ENCODE measurements at regions of chr7 and their contacts with region 1.

Region 1: DNA sequence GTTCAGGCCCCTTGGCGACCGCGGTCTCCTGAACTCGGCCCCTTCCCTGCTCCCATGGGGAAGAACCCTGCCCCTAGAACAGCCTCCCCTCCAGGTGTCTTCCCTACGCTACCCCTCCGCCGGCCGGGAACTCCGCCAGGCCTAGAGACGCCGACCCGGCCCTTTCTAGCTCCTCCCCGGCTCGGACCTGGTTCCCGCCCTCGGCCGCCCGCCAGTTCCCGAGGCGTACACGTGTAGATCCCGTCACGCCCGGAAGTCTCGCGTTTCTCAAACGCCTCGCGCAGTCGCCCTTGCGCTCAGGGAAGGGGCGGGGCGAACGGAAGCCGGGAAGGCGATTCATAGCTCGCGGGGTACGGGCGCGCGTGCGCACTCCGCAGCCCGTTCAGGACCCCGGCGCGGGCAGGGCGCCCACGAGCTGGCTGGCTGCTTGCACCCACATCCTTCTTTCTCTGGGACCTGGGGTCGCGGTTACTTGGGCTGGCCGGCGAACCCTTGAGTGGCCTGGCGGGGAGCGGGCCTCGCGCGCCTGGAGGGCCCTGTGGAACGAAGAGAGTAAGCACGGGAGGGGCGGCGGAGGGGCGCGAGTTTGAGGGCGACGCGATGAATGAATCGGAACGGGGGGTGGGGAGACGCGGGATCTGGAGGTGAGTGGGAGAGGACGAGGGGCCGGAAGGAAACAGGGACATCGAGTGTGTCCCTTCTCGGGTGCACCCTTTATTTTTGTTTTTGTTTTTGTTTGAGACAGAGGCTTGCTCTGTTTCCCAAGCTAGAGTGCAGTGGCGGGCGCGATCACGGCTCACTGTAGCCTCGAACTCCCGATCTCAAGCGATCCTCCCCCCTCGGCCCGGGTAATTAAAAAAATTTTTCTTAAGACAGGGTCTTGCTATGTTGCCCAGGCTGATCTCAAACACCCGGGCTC is at the start of gene POP7:
- DNase-seq: peak; percentile 95
- ATAC-seq: peak; percentile 91
- H3K4me3 ChIP-seq: peak within 1 kb of the TSS; percentile 76 to 97
- H3K27ac ChIP-seq: peak within 1 kb of the TSS; percentile 95
- H3K4me1 ChIP-seq: peaks cover 8 to 20% of the 10 kb centered on the region in 2 experiments; a peak in 3 of 4 replicates
- H3K27me3 ChIP-seq: no peaks in the 10 kb centered on the region
- CTCF ChIP-seq: no peak
- POLR2A ChIP-seq: peak; percentile 69
- RAD21 ChIP-seq: no peak
- total RNA-seq, gene POP7: 67.5 TPM

Region 2: GRCh38 chr7:100586266-100587025 is 119.6 kb before region 1 on chr7 and contains the start of gene FBXO24:
- CTCF ChIA-PET with region 1: interaction called, 6 read pairs
- POLR2A ChIA-PET with region 1: interaction called, 16 read pairs
- RAD21 ChIA-PET with region 1: no interaction called
- intact Hi-C with region 1: no loop called
- DNase-seq: peak; percentile 99
- ATAC-seq: peak; percentile 87
- H3K4me3 ChIP-seq: peak within 1 kb of the TSS; percentile 71 to 87
- H3K27ac ChIP-seq: peak within 1 kb of the TSS; percentile 97
- H3K4me1 ChIP-seq: peaks cover 2 to 22% of the 10 kb centered on the region in 2 experiments; a peak in 3 of 4 replicates
- H3K27me3 ChIP-seq: no peaks in the 10 kb centered on the region
- CTCF ChIP-seq: no peak
- POLR2A ChIP-seq: no peak
- RAD21 ChIP-seq: no peak
- total RNA-seq, gene FBXO24: 2.1 TPM

Region 3: GRCh38 chr7:100632951-100633717 is 72.9 kb before region 1 on chr7:
- CTCF ChIA-PET with region 1: interaction called, 18 read pairs
- POLR2A ChIA-PET with region 1: interaction called, 4 read pairs
- RAD21 ChIA-PET with region 1: no interaction called
- intact Hi-C with region 1: no loop called
- DNase-seq: no peak
- ATAC-seq: peak; percentile 76
- H3K4me3 ChIP-seq: peak overlapping the region; percentile 54 to 67
- H3K27ac ChIP-seq: peak overlapping the region; percentile 67
- H3K4me1 ChIP-seq: peaks cover 6 to 28% of the 10 kb centered on the region in 2 experiments; a peak in 3 of 4 replicates
- H3K27me3 ChIP-seq: no peaks in the 10 kb centered on the region
- CTCF ChIP-seq: peak in 2 of 3 experiments; percentile 36 to 57; a peak in 3 of 6 replicates
- POLR2A ChIP-seq: no peak
- RAD21 ChIP-seq: no peak

Region 4: DNA sequence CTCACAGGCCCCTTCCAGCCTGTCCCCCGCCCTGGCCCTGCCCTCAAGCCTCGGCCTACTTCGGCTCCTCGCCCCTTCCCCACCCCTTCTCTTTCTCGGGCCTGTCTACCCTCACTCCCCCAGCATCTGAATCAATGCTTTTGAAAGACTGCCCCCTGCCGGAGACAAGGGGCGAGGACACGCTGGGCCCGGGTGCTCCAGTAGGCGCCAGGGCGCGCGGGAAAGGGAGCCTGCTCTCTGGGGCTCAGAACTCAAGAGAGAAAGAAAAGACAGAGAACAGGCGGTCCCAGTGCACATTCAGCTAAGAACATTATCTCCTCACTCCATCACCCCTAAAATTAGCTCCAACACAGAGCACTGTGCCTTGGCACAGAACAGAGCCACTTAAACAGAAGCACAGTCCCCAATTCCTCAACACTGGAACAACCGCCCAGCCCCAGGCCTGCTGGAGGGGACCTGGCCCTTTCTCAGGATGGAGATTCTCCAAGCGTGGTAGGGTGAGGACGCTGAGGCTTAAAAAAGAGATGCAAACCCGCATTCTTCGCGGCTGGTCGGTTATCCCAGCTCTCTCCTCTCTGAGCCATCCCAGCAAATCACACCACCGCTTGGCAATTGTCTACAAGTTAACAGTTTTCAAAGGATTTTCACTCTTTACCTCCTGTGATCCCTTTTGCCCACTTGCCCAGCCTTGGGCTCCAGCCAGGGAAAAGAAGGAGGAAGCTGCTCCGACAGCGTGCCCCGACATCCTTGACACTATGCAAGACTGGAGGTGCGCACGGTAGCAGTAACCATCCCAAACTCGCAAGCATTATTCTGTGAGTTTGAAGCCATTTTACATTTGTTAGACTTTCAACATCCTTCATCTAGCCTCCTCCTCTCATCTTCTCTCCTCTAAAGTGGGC is 14.1 kb before region 1 on chr7:
- CTCF ChIA-PET with region 1: interaction called, 25 read pairs
- POLR2A ChIA-PET with region 1: interaction called, 4 read pairs
- RAD21 ChIA-PET with region 1: no interaction called
- intact Hi-C with region 1: no loop called
- DNase-seq: no peak
- ATAC-seq: peak; percentile 80
- H3K4me3 ChIP-seq: peak overlapping the region; percentile 87 to 89
- H3K27ac ChIP-seq: peak overlapping the region; percentile 47
- H3K4me1 ChIP-seq: peaks cover 18 to 33% of the 10 kb centered on the region in 2 experiments; a peak in 3 of 4 replicates
- H3K27me3 ChIP-seq: no peaks in the 10 kb centered on the region
- CTCF ChIP-seq: peak; percentile 89 to 94 (median 91)
- POLR2A ChIP-seq: no peak
- RAD21 ChIP-seq: peak; percentile 87

Region 5: DNA sequence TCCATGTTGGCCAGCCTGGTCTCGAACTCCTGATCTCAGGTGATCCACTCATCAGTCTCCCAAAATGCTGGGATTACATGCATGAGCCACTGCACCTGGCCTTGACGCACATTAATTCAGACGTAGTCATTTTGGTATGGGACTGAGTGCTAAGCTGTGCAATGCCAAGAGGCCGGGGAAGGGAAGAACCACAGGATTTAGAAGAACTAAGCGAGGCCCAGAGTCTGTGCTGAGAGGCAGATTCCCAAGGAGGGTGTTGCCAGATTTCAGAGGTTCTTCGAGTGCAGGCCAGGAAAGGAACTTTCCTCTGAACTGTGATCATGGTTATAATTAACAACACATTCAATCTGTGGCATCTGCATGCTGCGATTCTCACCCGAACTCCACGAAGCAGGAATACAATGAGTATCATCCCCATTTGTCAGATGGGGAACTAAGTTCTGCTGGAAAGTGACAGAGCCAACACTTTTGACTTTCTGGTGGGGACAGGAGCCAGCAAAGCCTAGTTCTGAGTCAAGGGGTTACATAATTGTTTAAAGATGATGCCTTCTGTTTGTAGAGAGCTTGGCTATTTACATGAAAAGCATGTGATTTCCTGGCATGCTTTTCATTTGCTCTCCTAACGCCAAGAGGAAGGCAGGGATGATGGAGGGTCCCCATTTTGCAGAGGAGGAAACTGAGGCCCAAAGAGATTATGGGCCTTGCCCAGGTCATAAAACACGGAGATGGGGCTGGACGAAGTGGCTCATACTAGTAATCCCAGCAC is 21.2 kb after region 1 on chr7:
- CTCF ChIA-PET with region 1: interaction called, 34 read pairs
- POLR2A ChIA-PET with region 1: interaction called, 10 read pairs
- RAD21 ChIA-PET with region 1: interaction called, 3 to 6 read pairs
- intact Hi-C with region 1: no loop called
- DNase-seq: no peak
- ATAC-seq: no peak
- H3K4me3 ChIP-seq: no peak overlapping the region
- H3K27ac ChIP-seq: no peak overlapping the region
- H3K4me1 ChIP-seq: peaks cover 9 to 17% of the 10 kb centered on the region in 2 experiments; a peak in 3 of 4 replicates
- H3K27me3 ChIP-seq: no peaks in the 10 kb centered on the region
- CTCF ChIP-seq: no peak
- POLR2A ChIP-seq: no peak
- RAD21 ChIP-seq: no peak

Region 6: GRCh38 chr7:100827330-100828227 is 121.6 kb after region 1 on chr7 and contains the start of gene EPHB4:
- CTCF ChIA-PET with region 1: interaction called, 10 read pairs
- POLR2A ChIA-PET with region 1: interaction called, 6 read pairs
- RAD21 ChIA-PET with region 1: interaction called in 1 of 2 experiments, 4 read pairs
- intact Hi-C with region 1: loop called (anchors 2 kb)
- DNase-seq: peak; percentile 77
- ATAC-seq: peak; percentile 90
- H3K4me3 ChIP-seq: peak within 1 kb of the TSS; percentile 64 to 86
- H3K27ac ChIP-seq: peak within 1 kb of the TSS; percentile 96
- H3K4me1 ChIP-seq: peaks cover 9 to 26% of the 10 kb centered on the region in 2 experiments; a peak in 3 of 4 replicates
- H3K27me3 ChIP-seq: no peaks in the 10 kb centered on the region
- CTCF ChIP-seq: peak; percentile 41 to 58 (median 41); a peak in 4 of 6 replicates
- POLR2A ChIP-seq: peak; percentile 54
- RAD21 ChIP-seq: no peak; the same call in 1 of the 2 replicates
- total RNA-seq, gene EPHB4: 61.1 TPM

Region 7: GRCh38 chr7:100957832-100958421 is 251.9 kb after region 1 on chr7:
- CTCF ChIA-PET with region 1: no interaction called
- POLR2A ChIA-PET with region 1: no interaction called
- RAD21 ChIA-PET with region 1: no interaction called
- intact Hi-C with region 1: no loop called
- DNase-seq: no peak
- ATAC-seq: 0 out of 2 replicates have a peak, but pooled peaks have one; percentile 27
- H3K4me3 ChIP-seq: no peak overlapping the region
- H3K27ac ChIP-seq: no peak overlapping the region
- H3K4me1 ChIP-seq: no peaks in the 10 kb centered on the region
- H3K27me3 ChIP-seq: peaks cover 38% of the 10 kb centered on the region
- CTCF ChIP-seq: no peak
- POLR2A ChIP-seq: no peak
- RAD21 ChIP-seq: no peak

Region 8: DNA sequence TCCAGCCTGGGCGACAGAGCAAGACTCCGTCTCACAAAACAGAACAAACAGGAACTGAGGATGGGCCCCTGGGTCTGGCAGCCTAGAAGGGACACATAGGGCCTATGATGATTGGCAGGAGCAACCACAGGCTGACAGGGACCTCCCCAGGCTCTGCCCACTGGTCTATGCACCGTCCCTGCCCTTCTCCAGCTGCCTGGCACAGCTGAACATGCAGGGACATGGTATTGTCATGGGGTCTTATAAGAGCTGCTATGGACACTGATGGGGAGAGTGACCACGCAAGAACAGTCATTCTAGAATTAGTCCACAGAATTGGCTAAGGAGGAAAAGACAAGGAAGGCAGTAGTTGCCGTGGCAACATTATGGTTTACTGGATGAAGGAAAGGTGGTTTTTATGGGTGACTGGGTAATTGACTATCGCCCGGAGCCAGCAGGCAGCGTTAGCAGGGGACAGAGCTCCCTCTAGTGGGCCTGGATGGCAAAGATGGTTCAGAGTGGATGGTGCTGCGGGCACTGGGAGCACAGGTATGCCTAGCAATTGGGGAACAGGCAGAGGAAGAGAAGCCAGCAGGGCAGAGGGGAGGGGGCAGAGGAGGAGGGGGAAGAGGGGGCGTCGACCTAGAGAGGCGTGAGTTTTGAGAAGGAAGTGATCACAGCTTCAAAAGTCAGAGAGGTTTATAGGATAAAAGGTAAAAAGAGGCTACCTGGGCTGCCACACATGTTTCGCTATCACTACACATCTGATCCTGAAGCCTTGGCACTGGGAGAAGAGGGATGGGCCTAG is 371.5 kb after region 1 on chr7:
- CTCF ChIA-PET with region 1: interaction called, 6 read pairs
- POLR2A ChIA-PET with region 1: interaction called, 3 read pairs
- RAD21 ChIA-PET with region 1: no interaction called
- intact Hi-C with region 1: loop called (anchors 5 kb)
- DNase-seq: peak; percentile 68
- ATAC-seq: peak; percentile 98
- H3K4me3 ChIP-seq: no peak overlapping the region
- H3K27ac ChIP-seq: no peak overlapping the region
- H3K4me1 ChIP-seq: peaks cover 0 to 10% of the 10 kb centered on the region in 2 experiments; a peak in 2 of 4 replicates
- H3K27me3 ChIP-seq: no peaks in the 10 kb centered on the region
- CTCF ChIP-seq: peak; percentile 88 to 96 (median 95)
- POLR2A ChIP-seq: no peak
- RAD21 ChIP-seq: peak; percentile 94

Measured in HCT116 (cell line).